ENCODE measurements at regions of chr7 and their contacts with region 1.

Region 1: DNA sequence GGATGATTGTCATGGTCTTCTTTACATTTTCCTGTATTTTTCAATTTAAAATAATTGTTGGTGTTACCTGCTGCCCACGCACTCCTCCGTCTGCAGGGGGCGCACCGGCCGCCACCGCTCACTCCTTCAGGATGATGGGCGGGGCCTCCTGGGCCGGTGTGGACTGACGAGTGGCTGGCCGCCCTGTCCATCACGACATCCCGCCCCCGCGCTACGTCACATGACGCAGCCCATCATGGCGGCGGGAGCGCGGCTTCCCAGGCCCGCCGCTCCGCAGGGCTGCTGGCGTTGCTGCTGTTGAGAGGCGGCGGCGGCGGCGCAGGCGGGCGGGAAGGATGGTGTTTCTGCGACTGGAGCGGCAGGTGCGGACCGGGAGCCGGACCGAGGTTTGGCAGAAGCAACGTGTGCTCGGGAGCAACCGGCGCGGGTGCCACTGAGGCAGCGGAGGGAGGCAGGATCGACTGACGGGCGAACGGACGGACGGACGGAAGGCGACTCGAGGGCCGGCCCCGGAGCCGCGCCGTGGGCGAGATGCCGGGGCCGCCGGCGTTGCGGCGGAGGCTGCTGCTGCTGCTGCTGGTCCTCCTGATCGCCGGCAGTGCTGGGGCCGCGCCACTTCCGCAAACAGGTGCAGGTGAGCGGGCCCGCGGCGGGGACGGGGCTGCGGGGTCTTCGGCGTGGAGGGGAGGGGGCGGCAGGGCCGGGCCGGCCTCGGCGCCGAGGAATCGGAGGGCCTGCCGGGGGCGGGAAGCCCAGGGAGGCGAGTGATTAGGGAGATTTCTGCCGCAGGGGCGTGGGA is at the start of gene LMTK2:
- DNase-seq: peak; percentile 97
- H3K4me3 Mint-ChIP-seq: peak within 1 kb of the TSS; percentile 97
- H3K27ac Mint-ChIP-seq: peak within 1 kb of the TSS; percentile 79
- H3K4me1 Mint-ChIP-seq: peaks cover 36% of the 10 kb centered on the region
- H3K27me3 Mint-ChIP-seq: peaks cover 7% of the 10 kb centered on the region
- total RNA-seq, gene LMTK2: 10.6 to 10.8 TPM

Region 2: DNA sequence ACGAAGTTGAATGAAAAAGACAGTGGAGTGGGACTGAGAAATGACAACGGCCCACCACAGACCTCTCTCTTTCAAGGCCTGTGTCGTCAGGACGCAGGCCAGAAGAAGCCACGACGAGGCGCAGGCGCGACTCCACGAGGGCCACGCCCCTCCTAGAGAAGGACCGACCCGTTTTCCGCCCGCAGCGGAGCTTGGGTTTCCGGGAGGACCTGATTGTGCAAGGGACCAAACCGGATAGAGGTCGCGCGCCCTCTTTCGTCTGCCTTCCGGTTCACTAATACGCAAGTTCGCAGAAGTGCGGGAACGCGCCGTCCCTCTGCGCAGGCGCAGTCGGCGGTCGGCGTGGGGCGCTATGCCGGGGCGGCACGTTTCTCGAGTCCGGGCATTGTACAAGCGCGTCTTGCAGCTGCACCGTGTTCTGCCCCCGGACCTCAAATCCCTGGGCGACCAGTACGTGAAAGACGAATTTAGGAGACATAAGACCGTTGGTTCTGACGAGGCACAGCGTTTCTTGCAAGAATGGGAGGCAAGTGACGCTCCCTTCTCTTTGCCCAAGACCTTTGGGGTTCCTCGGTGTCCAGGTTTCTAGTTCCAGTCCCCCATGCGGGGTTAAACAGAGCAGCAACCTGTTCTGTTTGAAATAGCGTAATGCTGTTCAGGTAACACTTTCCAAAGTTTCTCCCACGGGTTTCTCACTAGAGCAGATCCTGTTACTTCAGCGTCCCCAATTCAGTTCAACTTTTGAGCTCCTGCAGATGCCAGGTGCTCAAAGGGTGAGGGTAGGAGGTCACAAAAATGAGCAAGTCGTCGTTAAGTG is 989.3 kb before region 1 on chr7 and contains the start of gene SDHAF3:
- CTCF ChIA-PET with region 1: interaction called, 3 read pairs
- POLR2A ChIA-PET with region 1: no interaction called
- intact Hi-C with region 1: loop called (anchors 1 kb)
- DNase-seq: peak; percentile 99
- H3K4me3 Mint-ChIP-seq: peak within 1 kb of the TSS; percentile 89
- H3K27ac Mint-ChIP-seq: peak within 1 kb of the TSS; percentile 87
- H3K4me1 Mint-ChIP-seq: peaks cover 27% of the 10 kb centered on the region
- H3K27me3 Mint-ChIP-seq: no peaks in the 10 kb centered on the region
- total RNA-seq, gene SDHAF3: 21.8 to 24.5 TPM

Region 3: GRCh38 chr7:97971990-97972943 is 134.6 kb before region 1 on chr7:
- CTCF ChIA-PET with region 1: no interaction called
- POLR2A ChIA-PET with region 1: no interaction called
- intact Hi-C with region 1: loop called (anchors 1 kb)
- DNase-seq: peak; percentile 91
- H3K4me3 Mint-ChIP-seq: peak overlapping the region; percentile 96
- H3K27ac Mint-ChIP-seq: peak overlapping the region; percentile 94
- H3K4me1 Mint-ChIP-seq: peaks cover 26% of the 10 kb centered on the region
- H3K27me3 Mint-ChIP-seq: no peaks in the 10 kb centered on the region

Region 4: DNA sequence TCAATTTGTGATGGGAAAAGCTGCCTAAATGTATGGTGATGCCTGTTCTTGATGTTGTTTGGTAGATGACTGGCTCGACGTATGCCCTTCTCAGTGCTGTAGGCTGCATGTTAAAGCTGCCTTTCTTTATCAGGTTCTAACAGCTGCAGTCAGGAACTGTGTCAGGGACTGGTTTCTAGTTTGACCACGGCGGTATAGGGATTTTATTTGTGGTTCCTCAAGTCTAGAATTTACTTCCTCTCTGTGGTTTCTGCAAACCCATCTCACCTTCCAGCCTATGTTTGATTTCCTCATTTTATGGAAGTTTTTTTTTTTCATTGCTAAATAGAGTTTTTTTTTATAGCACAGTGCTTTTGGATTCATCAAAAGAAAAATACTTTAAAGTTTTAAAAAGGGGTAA is 26.3 kb after region 1 on chr7:
- CTCF ChIA-PET with region 1: interaction called, 8 read pairs
- POLR2A ChIA-PET with region 1: interaction called, 4 read pairs
- intact Hi-C with region 1: loop called (anchors 1 kb)
- DNase-seq: peak; percentile 28
- H3K4me3 Mint-ChIP-seq: no peak overlapping the region
- H3K27ac Mint-ChIP-seq: peak overlapping the region; percentile 43
- H3K4me1 Mint-ChIP-seq: peaks cover 44% of the 10 kb centered on the region
- H3K27me3 Mint-ChIP-seq: no peaks in the 10 kb centered on the region

Region 5: GRCh38 chr7:98251841-98252639 is 145.2 kb after region 1 on chr7 and contains the start of gene TECPR1:
- CTCF ChIA-PET with region 1: no interaction called
- POLR2A ChIA-PET with region 1: no interaction called
- intact Hi-C with region 1: loop called (anchors 2 kb)
- DNase-seq: peak; percentile 94
- H3K4me3 Mint-ChIP-seq: peak within 1 kb of the TSS; percentile 95
- H3K27ac Mint-ChIP-seq: peak within 1 kb of the TSS; percentile 94
- H3K4me1 Mint-ChIP-seq: peaks cover 52% of the 10 kb centered on the region
- H3K27me3 Mint-ChIP-seq: no peaks in the 10 kb centered on the region
- total RNA-seq, gene TECPR1: 34.5 to 35.3 TPM

Measured in activated CD4-positive, alpha-beta memory T cell treated with anti-CD3 and anti-CD28 coated beads for 36 hours (primary cell).